GM10248 (cell line): ENCODE measurements at regions of chr5 and their contacts with region 1.

Region 1: GRCh38 chr5:100827481-100827889 is 75.6 kb downstream of the ST8SIA4 start:
- DNase-seq: no peak
- CTCF ChIP-seq: no peak

Region 2: DNA sequence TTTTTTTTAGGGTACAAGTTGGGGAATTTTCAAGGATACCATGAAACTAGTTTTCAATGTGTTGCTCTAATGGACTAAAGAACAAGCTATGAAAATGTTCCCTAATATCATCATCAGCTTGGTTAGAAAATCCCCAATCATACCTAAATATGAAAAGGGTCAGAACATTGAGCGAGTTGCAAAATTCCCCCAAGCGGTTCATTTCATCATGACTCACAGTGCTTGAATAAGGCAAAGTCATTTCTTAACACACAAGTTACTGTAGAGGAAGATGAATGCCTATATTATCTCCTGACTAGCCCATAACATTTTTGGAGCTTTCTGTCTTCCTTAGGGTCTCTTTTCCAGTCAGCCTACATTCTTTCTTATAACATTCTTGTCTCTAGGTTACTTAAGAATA is 12.9 kb after region 1 on chr5:
- CTCF ChIA-PET with region 1: interaction called, 28 read pairs
- POLR2A ChIA-PET with region 1: interaction called, 4 read pairs
- DNase-seq: no peak
- CTCF ChIP-seq: no peak